Sciatic nerve (tissue), 2 donors: ENCODE measurements at regions of chr21 and their contacts with region 1.

Region 1: DNA sequence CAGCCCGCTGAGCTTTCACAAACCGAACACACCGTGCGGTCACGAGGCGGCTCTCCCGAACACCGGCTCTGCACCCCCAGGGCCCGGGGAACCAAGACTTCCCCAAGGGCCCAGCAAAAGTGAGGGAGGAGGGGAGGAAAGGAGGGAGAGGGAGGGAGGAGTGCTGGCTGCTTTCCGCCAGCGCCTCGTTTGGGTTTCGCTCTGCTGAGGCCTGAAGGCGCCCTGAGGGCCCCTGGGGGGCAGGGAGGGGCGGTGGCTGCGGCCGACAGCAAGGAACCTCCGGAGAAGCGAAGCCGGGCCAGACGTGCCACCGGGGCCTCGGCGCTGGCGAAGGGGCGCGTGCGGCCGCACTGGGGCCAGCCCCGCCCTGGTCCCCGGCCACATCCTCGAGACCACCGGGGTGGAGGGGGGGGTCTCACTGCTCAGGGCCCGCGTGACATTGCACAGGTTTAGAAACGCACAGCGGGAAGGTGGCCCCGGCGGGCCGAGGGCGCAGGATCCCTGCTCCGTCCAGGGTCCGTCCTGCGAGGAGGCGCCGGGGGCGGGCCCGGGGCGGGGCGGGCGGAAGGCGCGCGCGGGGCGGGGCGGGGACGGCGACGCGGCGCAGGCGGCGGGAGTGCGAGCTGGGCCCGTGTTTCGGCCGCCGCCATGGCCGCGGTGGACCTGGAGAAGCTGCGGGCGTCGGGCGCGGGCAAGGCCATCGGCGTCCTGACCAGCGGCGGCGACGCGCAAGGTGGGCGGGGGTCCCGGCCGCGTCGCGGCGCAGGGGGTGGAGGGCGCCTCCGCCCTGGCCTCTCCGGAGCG is at the start of gene PFKL:
- DNase-seq: peak; percentile 87
- ATAC-seq: peak; percentile 50
- total RNA-seq, gene PFKL: 189 TPM

Region 2: GRCh38 chr21:44006017-44006619 is 293.5 kb before region 1 on chr21:
- intact Hi-C with region 1: loop called (anchors 10 kb)
- DNase-seq: no peak
- ATAC-seq: peak; percentile 69

Region 3: GRCh38 chr21:44331650-44332307 is 32.1 kb after region 1 on chr21:
- intact Hi-C with region 1: no loop called
- DNase-seq: no peak
- ATAC-seq: peak; percentile 2

Region 4: GRCh38 chr21:44804762-44805161 is 505.1 kb after region 1 on chr21:
- intact Hi-C with region 1: loop called (anchors 2 kb)
- DNase-seq: no peak
- ATAC-seq: no peak